Caco-2 (cell line): ENCODE measurements at regions of chr1 and their contacts with region 1.

Region 1: GRCh38 chr1:23916209-23917131 is 3.3 kb upstream of the CNR2 start:
- DNase-seq: peak; percentile 81 to 84
- H3K4me3 ChIP-seq: no peak overlapping the region
- H3K4me3 Mint-ChIP-seq: no peak overlapping the region
- H3K27ac Mint-ChIP-seq: no peak overlapping the region
- H3K4me1 ChIP-seq: 0 out of 2 replicates have a peak, but pooled peaks cover 4% of the 10 kb centered on the region
- H3K4me1 Mint-ChIP-seq: no peaks in the 10 kb centered on the region
- H3K27me3 ChIP-seq: no peaks in the 10 kb centered on the region
- H3K27me3 Mint-ChIP-seq: no peaks in the 10 kb centered on the region
- CTCF ChIP-seq: peak; percentile 63 to 76

Region 2: DNA sequence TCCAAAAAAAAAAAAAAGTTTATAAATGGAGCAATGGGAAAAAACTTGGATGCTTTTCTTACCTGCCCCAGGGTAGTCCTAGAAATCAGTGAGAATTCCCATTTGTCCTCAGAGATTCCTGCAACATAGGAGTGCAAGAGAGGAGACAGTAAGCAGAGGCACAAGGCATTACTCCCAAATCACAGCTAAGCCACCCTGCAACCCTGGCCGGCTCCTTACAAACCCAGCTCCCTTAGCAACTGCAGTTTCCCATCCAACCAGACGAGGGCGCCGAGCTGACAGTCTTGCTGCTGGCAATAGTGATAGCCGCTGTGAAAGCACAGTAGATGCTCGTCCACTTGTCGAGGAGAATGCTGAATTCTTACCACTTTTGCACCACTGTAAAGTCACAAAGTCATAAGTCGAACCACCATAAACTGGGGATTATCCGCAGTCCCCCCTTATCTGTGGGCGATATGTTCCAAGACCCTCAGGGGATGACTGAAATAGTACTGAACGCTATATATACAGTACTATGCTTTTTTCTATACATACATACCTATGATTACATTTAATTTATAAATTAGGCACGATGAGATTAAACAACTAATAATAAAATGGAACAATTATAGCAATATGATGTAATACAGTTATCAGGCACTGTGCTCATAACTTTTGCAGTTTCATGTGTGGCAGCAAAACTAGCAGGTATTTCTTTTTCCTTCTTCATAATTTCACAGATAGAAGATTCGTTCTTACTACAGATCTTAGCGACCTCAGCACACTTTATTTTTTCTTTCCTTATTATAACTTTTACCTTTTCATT is 144.2 kb before region 1 on chr1:
- CTCF ChIA-PET with region 1: interaction called, 32 read pairs
- POLR2A ChIA-PET with region 1: no interaction called
- intact Hi-C with region 1: loop called (anchors 1 kb)
- DNase-seq: peak; percentile 81 to 82
- H3K4me3 ChIP-seq: no peak overlapping the region
- H3K4me3 Mint-ChIP-seq: no peak overlapping the region
- H3K27ac Mint-ChIP-seq: no peak overlapping the region
- H3K4me1 ChIP-seq: no peaks in the 10 kb centered on the region
- H3K4me1 Mint-ChIP-seq: no peaks in the 10 kb centered on the region
- H3K27me3 ChIP-seq: no peaks in the 10 kb centered on the region
- H3K27me3 Mint-ChIP-seq: no peaks in the 10 kb centered on the region
- CTCF ChIP-seq: peak; percentile 76 to 87

Region 3: GRCh38 chr1:23800400-23801337 is 115.8 kb before region 1 on chr1 and contains the start of gene GALE:
- CTCF ChIA-PET with region 1: interaction called, 4 read pairs
- POLR2A ChIA-PET with region 1: no interaction called
- intact Hi-C with region 1: loop called (anchors 2 kb)
- DNase-seq: peak; percentile 91 to 94
- H3K4me3 ChIP-seq: peak within 1 kb of the TSS; percentile 96
- H3K4me3 Mint-ChIP-seq: peak within 1 kb of the TSS; percentile 91
- H3K27ac Mint-ChIP-seq: peak within 1 kb of the TSS; percentile 96
- H3K4me1 ChIP-seq: peaks cover 7% of the 10 kb centered on the region; the same call in 1 of the 2 replicates
- H3K4me1 Mint-ChIP-seq: no peaks in the 10 kb centered on the region
- H3K27me3 ChIP-seq: no peaks in the 10 kb centered on the region
- H3K27me3 Mint-ChIP-seq: no peaks in the 10 kb centered on the region
- CTCF ChIP-seq: no peak
- total RNA-seq, gene GALE: 51.6 and 57.1 TPM in 2 replicates

Region 4: GRCh38 chr1:23809751-23810171 is 106.7 kb before region 1 on chr1:
- CTCF ChIA-PET with region 1: interaction called, 23 read pairs
- POLR2A ChIA-PET with region 1: no interaction called
- intact Hi-C with region 1: loop called (anchors 1 kb)
- DNase-seq: peak; percentile 76 to 82
- H3K4me3 ChIP-seq: no peak overlapping the region
- H3K4me3 Mint-ChIP-seq: no peak overlapping the region
- H3K27ac Mint-ChIP-seq: no peak overlapping the region
- H3K4me1 ChIP-seq: no peaks in the 10 kb centered on the region
- H3K4me1 Mint-ChIP-seq: no peaks in the 10 kb centered on the region
- H3K27me3 ChIP-seq: no peaks in the 10 kb centered on the region
- H3K27me3 Mint-ChIP-seq: no peaks in the 10 kb centered on the region
- CTCF ChIP-seq: peak; percentile 57 to 77

Region 5: GRCh38 chr1:23867953-23868556 is 48.4 kb before region 1 on chr1 and contains the start of gene FUCA1:
- CTCF ChIA-PET with region 1: interaction called, 6 read pairs
- POLR2A ChIA-PET with region 1: no interaction called
- intact Hi-C with region 1: loop called (anchors 2 kb)
- DNase-seq: peak; percentile 94
- H3K4me3 ChIP-seq: peak within 1 kb of the TSS; percentile 68
- H3K4me3 Mint-ChIP-seq: peak within 1 kb of the TSS; percentile 82
- H3K27ac Mint-ChIP-seq: peak within 1 kb of the TSS; percentile 81
- H3K4me1 ChIP-seq: 0 out of 2 replicates have a peak, but pooled peaks cover 3% of the 10 kb centered on the region
- H3K4me1 Mint-ChIP-seq: peaks cover 8% of the 10 kb centered on the region
- H3K27me3 ChIP-seq: no peaks in the 10 kb centered on the region
- H3K27me3 Mint-ChIP-seq: no peaks in the 10 kb centered on the region
- CTCF ChIP-seq: peak; percentile 75 to 88
- total RNA-seq, gene FUCA1: 21.3 and 25.5 TPM in 2 replicates

Region 6: GRCh38 chr1:23959041-23959460 is 42.6 kb after region 1 on chr1:
- CTCF ChIA-PET with region 1: interaction called, 6 read pairs
- POLR2A ChIA-PET with region 1: no interaction called
- intact Hi-C with region 1: loop called (anchors 5 kb)
- DNase-seq: peak; percentile 86 to 93
- H3K4me3 ChIP-seq: peak overlapping the region; percentile 69
- H3K4me3 Mint-ChIP-seq: peak overlapping the region; percentile 94
- H3K27ac Mint-ChIP-seq: peak overlapping the region; percentile 99
- H3K4me1 ChIP-seq: peaks cover 7% of the 10 kb centered on the region; the same call in 1 of the 2 replicates
- H3K4me1 Mint-ChIP-seq: no peaks in the 10 kb centered on the region
- H3K27me3 ChIP-seq: no peaks in the 10 kb centered on the region
- H3K27me3 Mint-ChIP-seq: no peaks in the 10 kb centered on the region
- CTCF ChIP-seq: peak in 1 of 2 experiments; percentile 45